Mammary epithelial cell (primary cell): ENCODE measurements at regions of chr6 and their contacts with region 1.

Region 1: GRCh38 chr6:96089173-96089572 is 73.4 kb downstream of the FUT9 start:
- DNase-seq: peak; percentile 2
- H3K4me3 ChIP-seq: no peak overlapping the region
- H3K27ac ChIP-seq: no peak overlapping the region
- H3K4me1 ChIP-seq: no peaks in the 10 kb centered on the region
- H3K27me3 ChIP-seq: no peaks in the 10 kb centered on the region
- CTCF ChIP-seq: peak; percentile 52 to 71

Region 2: GRCh38 chr6:95413789-95414188 is 675.4 kb before region 1 on chr6:
- CTCF ChIA-PET with region 1: no interaction called
- dilution Hi-C with region 1: no loop called
- in situ Hi-C with region 1: loop called in 1 of 2 experiments (anchors 25 kb)
- intact Hi-C with region 1: no loop called
- DNase-seq: no peak
- H3K4me3 ChIP-seq: no peak overlapping the region
- H3K27ac ChIP-seq: no peak overlapping the region
- H3K4me1 ChIP-seq: no peaks in the 10 kb centered on the region
- H3K27me3 ChIP-seq: no peaks in the 10 kb centered on the region
- CTCF ChIP-seq: no peak